Activated naive CD4-positive, alpha-beta T cell treated with anti-CD3 and anti-CD28 coated beads for 36 hours (primary cell): ENCODE measurements at regions of chrX and their contacts with region 1.

Region 1: DNA sequence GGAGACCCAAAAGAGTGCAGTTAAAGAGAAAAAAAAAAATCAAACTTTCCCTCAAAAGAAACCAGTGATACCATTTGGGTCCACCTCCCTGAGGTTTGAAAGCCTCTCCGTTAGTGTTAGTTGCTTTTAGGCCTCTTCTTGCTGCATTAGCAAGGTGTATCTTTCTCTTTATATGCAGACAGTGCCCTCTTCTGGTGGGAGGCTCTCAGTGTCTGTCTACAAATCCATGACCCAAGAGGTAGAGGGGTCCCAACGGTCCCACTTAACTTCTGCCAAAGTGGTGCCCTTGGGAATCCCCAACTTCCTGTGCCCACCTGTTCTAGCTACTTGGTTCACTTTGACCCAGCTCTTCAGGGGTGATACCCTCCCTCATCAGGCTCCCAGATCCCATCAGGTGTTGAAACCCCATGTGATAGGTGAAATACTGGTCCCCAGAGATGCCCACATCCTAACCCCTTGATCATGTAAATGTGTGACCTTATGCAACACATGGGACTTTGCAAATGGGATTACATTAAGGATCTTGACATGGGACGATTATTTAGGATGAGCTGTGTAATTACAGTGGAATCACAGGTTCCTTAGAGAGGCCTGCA is 63.7 kb upstream of the CD99 start:
- DNase-seq: peak; percentile 74
- H3K4me3 Mint-ChIP-seq: no peak overlapping the region
- H3K27ac Mint-ChIP-seq: peak overlapping the region; percentile 27
- H3K4me1 Mint-ChIP-seq: peaks cover 40% of the 10 kb centered on the region
- H3K27me3 Mint-ChIP-seq: no peaks in the 10 kb centered on the region

Region 2: DNA sequence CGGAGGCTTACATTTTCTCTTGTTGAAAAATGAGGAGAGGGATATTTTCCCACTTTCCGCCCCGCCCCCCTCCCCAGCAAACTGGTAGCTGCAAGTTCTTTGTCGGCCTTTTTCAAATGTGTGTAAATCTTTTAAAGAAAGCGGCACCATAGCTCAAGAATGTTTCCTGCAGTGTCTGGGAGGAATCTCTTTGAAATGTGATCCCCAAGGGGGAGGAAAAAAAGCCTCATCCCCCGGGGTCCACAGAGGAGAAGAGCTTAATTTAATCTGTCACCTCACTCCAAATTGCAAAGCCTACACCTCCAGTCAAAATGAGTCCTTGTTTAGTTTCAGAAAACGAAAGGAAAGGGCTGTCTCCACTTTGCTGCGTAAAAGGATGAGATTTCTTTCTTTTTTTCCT is 977.7 kb before region 1 on chrX:
- CTCF ChIA-PET with region 1: no interaction called
- intact Hi-C with region 1: loop called (anchors 1 kb)
- DNase-seq: no peak
- H3K4me3 Mint-ChIP-seq: no peak overlapping the region
- H3K27ac Mint-ChIP-seq: no peak overlapping the region
- H3K4me1 Mint-ChIP-seq: peaks cover 5% of the 10 kb centered on the region
- H3K27me3 Mint-ChIP-seq: no peaks in the 10 kb centered on the region

Region 3: GRCh38 chrX:1673337-1673736 is 954.0 kb before region 1 on chrX:
- CTCF ChIA-PET with region 1: no interaction called
- intact Hi-C with region 1: loop called (anchors 1 kb)
- DNase-seq: peak; percentile 59
- H3K4me3 Mint-ChIP-seq: no peak overlapping the region
- H3K27ac Mint-ChIP-seq: no peak overlapping the region
- H3K4me1 Mint-ChIP-seq: peaks cover 3% of the 10 kb centered on the region
- H3K27me3 Mint-ChIP-seq: no peaks in the 10 kb centered on the region

Region 4: GRCh38 chrX:2500267-2501075 is 126.9 kb before region 1 on chrX and contains the starts of genes DHRSX and ZBED1:
- CTCF ChIA-PET with region 1: no interaction called
- intact Hi-C with region 1: loop called (anchors 2 kb)
- DNase-seq: peak; percentile 62
- H3K4me3 Mint-ChIP-seq: peak within 1 kb of the TSS; percentile 76
- H3K27ac Mint-ChIP-seq: peak within 1 kb of the TSS; percentile 72
- H3K4me1 Mint-ChIP-seq: peaks cover 26% of the 10 kb centered on the region
- H3K27me3 Mint-ChIP-seq: no peaks in the 10 kb centered on the region
- total RNA-seq, gene DHRSX: 18.8 to 21.4 TPM
- total RNA-seq, gene ZBED1: 18.9 to 20.6 TPM

Region 5: DNA sequence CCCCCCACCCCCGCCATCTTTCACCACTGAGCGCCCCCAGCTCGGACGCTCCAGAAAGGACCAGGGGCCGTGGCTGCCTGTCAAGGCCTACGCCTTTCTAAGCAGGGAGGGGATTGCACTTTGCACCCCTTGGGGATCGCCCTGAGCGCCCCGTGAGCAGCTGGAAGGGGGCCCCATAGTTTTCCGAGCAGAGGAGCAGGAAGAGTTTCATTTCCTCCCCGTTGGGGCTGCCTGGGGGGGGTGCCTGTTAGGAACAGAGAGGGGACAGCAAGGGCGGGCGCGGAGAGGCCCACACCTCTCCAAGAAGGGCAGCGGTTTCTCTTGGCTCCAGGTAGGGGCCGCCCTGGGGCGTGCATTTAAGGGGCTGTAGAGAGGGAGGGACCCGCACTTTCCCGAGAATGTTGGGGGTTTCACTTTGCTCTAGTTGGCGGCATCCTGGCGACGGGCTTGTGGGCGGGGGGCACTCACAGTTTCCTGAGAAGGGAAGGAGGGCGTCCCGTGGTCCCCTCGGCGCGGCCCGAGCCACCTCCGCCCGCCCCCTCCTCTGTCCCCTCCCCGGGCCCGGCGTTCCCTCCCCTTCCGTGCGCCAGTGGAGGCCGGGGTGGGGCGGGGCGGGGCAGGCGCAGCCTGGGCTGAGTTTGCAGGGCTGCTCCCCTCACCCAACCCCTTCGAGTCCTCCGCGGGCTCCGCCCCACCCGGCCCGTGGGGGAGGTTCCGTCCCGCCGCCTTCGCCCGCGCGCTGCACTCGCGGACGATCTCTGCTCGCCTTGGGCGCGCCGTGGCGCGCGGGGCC is 18.5 kb before region 1 on chrX:
- CTCF ChIA-PET with region 1: no interaction called
- intact Hi-C with region 1: loop called (anchors 1 kb)
- DNase-seq: peak; percentile 82
- H3K4me3 Mint-ChIP-seq: peak overlapping the region; percentile 90
- H3K27ac Mint-ChIP-seq: peak overlapping the region; percentile 82
- H3K4me1 Mint-ChIP-seq: peaks cover 45% of the 10 kb centered on the region
- H3K27me3 Mint-ChIP-seq: no peaks in the 10 kb centered on the region

Region 6: GRCh38 chrX:2696698-2697215 is 69.4 kb after region 1 on chrX:
- CTCF ChIA-PET with region 1: no interaction called
- intact Hi-C with region 1: loop called (anchors 1 kb)
- DNase-seq: peak; percentile 76
- H3K4me3 Mint-ChIP-seq: peak overlapping the region; percentile 58
- H3K27ac Mint-ChIP-seq: peak overlapping the region; percentile 99
- H3K4me1 Mint-ChIP-seq: peaks cover 80% of the 10 kb centered on the region
- H3K27me3 Mint-ChIP-seq: no peaks in the 10 kb centered on the region

Region 7: DNA sequence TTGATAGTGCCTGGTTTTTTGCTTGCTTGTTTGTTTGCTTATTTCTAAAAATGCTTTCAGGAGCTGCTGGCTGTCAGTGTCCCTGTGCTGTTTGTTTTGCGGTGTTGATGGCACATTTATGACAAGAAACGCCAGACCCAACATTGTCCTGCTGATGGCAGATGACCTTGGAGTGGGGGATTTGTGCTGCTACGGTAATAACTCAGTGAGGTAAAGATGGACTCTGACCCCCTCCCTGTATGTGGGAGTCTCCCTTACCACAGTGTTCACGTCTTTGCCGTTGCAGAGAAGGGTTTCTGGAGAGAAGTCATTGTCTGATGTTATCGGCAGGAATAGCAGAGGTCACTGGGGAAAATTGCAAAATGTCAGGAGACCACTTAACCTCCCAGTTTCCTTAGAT is 379.1 kb after region 1 on chrX and contains the start of gene ARSH:
- CTCF ChIA-PET with region 1: no interaction called
- intact Hi-C with region 1: no loop called
- DNase-seq: no peak
- H3K4me3 Mint-ChIP-seq: no peak within 1 kb of the TSS
- H3K27ac Mint-ChIP-seq: no peak within 1 kb of the TSS
- H3K4me1 Mint-ChIP-seq: no peaks in the 10 kb centered on the region
- H3K27me3 Mint-ChIP-seq: no peaks in the 10 kb centered on the region
- total RNA-seq, gene ARSH: not detected

Region 8: GRCh38 chrX:3713225-3713936 is 1086.0 kb after region 1 on chrX and contains the start of gene PRKX:
- CTCF ChIA-PET with region 1: no interaction called
- intact Hi-C with region 1: no loop called
- DNase-seq: peak; percentile 54
- H3K4me3 Mint-ChIP-seq: peak within 1 kb of the TSS; percentile 88
- H3K27ac Mint-ChIP-seq: no peak within 1 kb of the TSS
- H3K4me1 Mint-ChIP-seq: peaks cover 20% of the 10 kb centered on the region
- H3K27me3 Mint-ChIP-seq: no peaks in the 10 kb centered on the region
- total RNA-seq, gene PRKX: 57.0 to 57.6 TPM